GM12878 (cell line): ENCODE measurements at regions of chr2 and their contacts with region 1.

Region 1: DNA sequence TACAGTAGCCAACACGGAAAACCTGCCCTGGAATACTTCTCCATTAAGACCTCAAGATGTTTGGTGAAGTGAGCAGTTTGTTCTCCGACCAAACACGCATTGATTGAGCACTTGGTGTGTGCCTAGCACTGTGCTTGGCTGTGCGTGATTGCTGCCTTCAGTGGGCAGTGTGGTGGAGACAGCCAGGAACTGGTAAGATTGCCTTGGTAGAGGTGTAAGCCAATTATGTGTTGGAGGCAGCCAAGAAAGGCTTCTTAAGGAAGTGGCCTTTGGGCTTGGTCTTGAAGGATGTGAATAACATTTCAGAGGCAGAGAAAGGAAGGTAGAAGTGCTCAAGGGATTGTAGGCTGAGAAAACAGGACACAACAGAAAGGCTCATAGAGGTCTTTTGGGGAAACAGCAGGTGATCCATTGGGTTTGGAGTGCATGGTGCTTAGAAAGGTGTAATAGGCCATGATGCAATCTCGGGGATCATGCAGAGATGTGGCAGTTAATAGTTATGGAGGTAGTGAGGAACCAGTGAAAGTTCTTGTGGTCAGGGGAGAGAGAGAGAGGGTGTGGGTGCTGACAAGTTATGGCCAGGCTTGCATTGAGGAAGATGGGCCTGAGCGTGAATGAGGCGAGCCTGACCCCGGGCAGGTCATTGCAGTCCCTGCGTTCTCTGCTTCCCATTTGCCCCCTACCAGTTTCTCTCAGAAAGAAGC is 6.3 kb downstream of the B3GNT2 start:
- DNase-seq: no peak
- ATAC-seq: peak; percentile 62
- H3K4me3 ChIP-seq: peak overlapping the region; percentile 86
- H3K27ac ChIP-seq: peak overlapping the region; percentile 89
- H3K4me1 ChIP-seq: peaks cover 26% of the 10 kb centered on the region
- H3K27me3 ChIP-seq: no peaks in the 10 kb centered on the region
- CTCF ChIP-seq: no peak
- EP300 ChIP-seq: 0 out of 4 replicates have a peak, but pooled peaks of 1 of the 2 experiments have one; percentile 31
- POLR2A ChIP-seq: peak; percentile 65
- RAD21 ChIP-seq: no peak

Region 2: GRCh38 chr2:62038975-62039771 is 163.0 kb before region 1 on chr2:
- CTCF ChIA-PET with region 1: interaction called, 3 read pairs
- POLR2A ChIA-PET with region 1: interaction called, 3 read pairs
- RAD21 ChIA-PET with region 1: interaction called, 11 read pairs
- SMC1A ChIA-PET with region 1: interaction called, 6 read pairs
- in situ Hi-C with region 1: no loop called
- intact Hi-C with region 1: no loop called
- DNase-seq: peak; percentile 98
- ATAC-seq: peak; percentile 99
- H3K4me3 ChIP-seq: peak overlapping the region; percentile 16; the same call in 1 of the 2 replicates
- H3K27ac ChIP-seq: peak overlapping the region; percentile 71
- H3K4me1 ChIP-seq: peaks cover 25% of the 10 kb centered on the region
- H3K27me3 ChIP-seq: no peaks in the 10 kb centered on the region
- CTCF ChIP-seq: no peak
- EP300 ChIP-seq: peak; percentile 91 to 100
- POLR2A ChIP-seq: no peak
- RAD21 ChIP-seq: peak; percentile 33; the same call in 1 of the 2 replicates

Region 3: GRCh38 chr2:62140426-62141141 is 61.6 kb before region 1 on chr2:
- CTCF ChIA-PET with region 1: interaction called, 7 read pairs
- POLR2A ChIA-PET with region 1: interaction called, 20 read pairs
- RAD21 ChIA-PET with region 1: interaction called, 63 read pairs
- SMC1A ChIA-PET with region 1: interaction called, 91 read pairs
- in situ Hi-C with region 1: no loop called
- intact Hi-C with region 1: loop called (anchors 2 kb)
- DNase-seq: peak; percentile 85
- ATAC-seq: peak; percentile 68
- H3K4me3 ChIP-seq: no peak overlapping the region
- H3K27ac ChIP-seq: peak overlapping the region; percentile 90
- H3K4me1 ChIP-seq: peaks cover 62% of the 10 kb centered on the region
- H3K27me3 ChIP-seq: no peaks in the 10 kb centered on the region
- CTCF ChIP-seq: no peak
- EP300 ChIP-seq: peak in 1 of 2 experiments; percentile 45; a peak in 1 of 4 replicates
- POLR2A ChIP-seq: no peak
- RAD21 ChIP-seq: peak; percentile 29; the same call in 1 of the 2 replicates

Region 4: GRCh38 chr2:62216616-62217015 is 14.4 kb after region 1 on chr2:
- CTCF ChIA-PET with region 1: interaction called, 6 read pairs
- POLR2A ChIA-PET with region 1: interaction called, 17 read pairs
- RAD21 ChIA-PET with region 1: interaction called, 41 read pairs
- SMC1A ChIA-PET with region 1: interaction called, 61 read pairs
- in situ Hi-C with region 1: no loop called
- intact Hi-C with region 1: no loop called
- DNase-seq: no peak
- ATAC-seq: no peak
- H3K4me3 ChIP-seq: no peak overlapping the region
- H3K27ac ChIP-seq: no peak overlapping the region
- H3K4me1 ChIP-seq: peaks cover 45% of the 10 kb centered on the region
- H3K27me3 ChIP-seq: no peaks in the 10 kb centered on the region
- CTCF ChIP-seq: no peak
- EP300 ChIP-seq: no peak
- POLR2A ChIP-seq: no peak
- RAD21 ChIP-seq: no peak

Region 5: GRCh38 chr2:62313449-62314227 is 111.5 kb after region 1 on chr2:
- CTCF ChIA-PET with region 1: interaction called, 15 read pairs
- POLR2A ChIA-PET with region 1: interaction called, 49 read pairs
- RAD21 ChIA-PET with region 1: interaction called, 114 read pairs
- SMC1A ChIA-PET with region 1: interaction called, 47 read pairs
- in situ Hi-C with region 1: no loop called
- intact Hi-C with region 1: no loop called
- DNase-seq: peak; percentile 91
- ATAC-seq: peak; percentile 88
- H3K4me3 ChIP-seq: peak overlapping the region; percentile 27; the same call in 1 of the 2 replicates
- H3K27ac ChIP-seq: peak overlapping the region; percentile 92
- H3K4me1 ChIP-seq: peaks cover 54% of the 10 kb centered on the region
- H3K27me3 ChIP-seq: no peaks in the 10 kb centered on the region
- CTCF ChIP-seq: no peak
- EP300 ChIP-seq: no peak
- POLR2A ChIP-seq: no peak
- RAD21 ChIP-seq: peak; percentile 33; the same call in 1 of the 2 replicates

Region 6: DNA sequence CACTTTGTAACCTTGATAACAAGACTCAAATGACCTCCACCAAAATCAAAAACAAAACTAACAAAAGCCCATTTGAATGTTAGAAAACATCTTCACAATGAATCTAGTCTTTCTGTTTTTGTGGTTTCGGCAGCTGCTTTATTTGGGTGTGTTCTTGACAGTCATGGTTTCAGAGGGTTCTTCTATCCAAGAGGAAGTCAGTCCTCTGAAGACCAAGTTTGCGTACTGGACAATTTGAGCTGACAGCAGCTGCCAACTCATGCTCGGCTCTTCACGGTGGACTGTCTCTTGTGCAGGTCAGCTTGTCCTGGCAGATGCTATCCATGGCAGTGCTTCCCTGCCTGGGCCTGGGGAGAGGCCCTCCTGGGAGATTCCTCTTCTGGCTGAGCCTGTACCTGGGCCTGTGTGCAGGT is 212.9 kb after region 1 on chr2:
- CTCF ChIA-PET with region 1: interaction called, 6 read pairs
- POLR2A ChIA-PET with region 1: interaction called, 4 read pairs
- RAD21 ChIA-PET with region 1: interaction called, 16 read pairs
- SMC1A ChIA-PET with region 1: interaction called, 20 read pairs
- in situ Hi-C with region 1: loop called (anchors 10 kb)
- intact Hi-C with region 1: loop called (anchors 2 kb)
- DNase-seq: peak; percentile 78
- ATAC-seq: peak; percentile 85
- H3K4me3 ChIP-seq: peak overlapping the region; percentile 37; the same call in 1 of the 2 replicates
- H3K27ac ChIP-seq: peak overlapping the region; percentile 70
- H3K4me1 ChIP-seq: peaks cover 39% of the 10 kb centered on the region
- H3K27me3 ChIP-seq: no peaks in the 10 kb centered on the region
- CTCF ChIP-seq: no peak
- EP300 ChIP-seq: peak in 1 of 2 experiments; percentile 35; a peak in 1 of 4 replicates
- POLR2A ChIP-seq: no peak
- RAD21 ChIP-seq: peak; percentile 3; the same call in 1 of the 2 replicates

Region 7: DNA sequence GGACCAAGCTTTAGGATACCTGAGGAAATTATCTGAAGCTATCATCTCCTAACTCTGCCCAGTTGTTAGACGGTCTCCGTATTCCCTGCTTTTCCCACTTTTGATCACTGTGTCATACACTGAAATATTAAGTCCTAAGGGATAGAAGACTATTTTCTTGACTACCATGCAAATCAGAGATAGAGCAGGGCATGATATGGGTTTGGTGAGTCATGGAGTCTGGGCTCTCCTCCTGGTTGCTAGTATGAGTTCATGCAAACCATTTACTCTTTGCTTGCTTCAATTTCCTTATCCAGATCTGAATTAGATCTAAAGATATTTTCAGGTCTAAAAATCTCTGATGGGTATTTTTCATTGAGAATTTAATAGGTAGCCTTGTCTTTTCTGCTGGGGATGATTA is 558.4 kb after region 1 on chr2:
- CTCF ChIA-PET with region 1: no interaction called
- POLR2A ChIA-PET with region 1: no interaction called
- RAD21 ChIA-PET with region 1: no interaction called
- SMC1A ChIA-PET with region 1: no interaction called
- in situ Hi-C with region 1: no loop called
- intact Hi-C with region 1: no loop called
- DNase-seq: no peak
- ATAC-seq: no peak
- H3K4me3 ChIP-seq: no peak overlapping the region
- H3K27ac ChIP-seq: no peak overlapping the region
- H3K4me1 ChIP-seq: no peaks in the 10 kb centered on the region
- H3K27me3 ChIP-seq: no peaks in the 10 kb centered on the region
- CTCF ChIP-seq: no peak
- EP300 ChIP-seq: no peak
- POLR2A ChIP-seq: no peak
- RAD21 ChIP-seq: no peak